Naive thymus-derived CD8-positive, alpha-beta T cell (primary cell): ENCODE measurements at regions of chr16 and their contacts with region 1.

Region 1: DNA sequence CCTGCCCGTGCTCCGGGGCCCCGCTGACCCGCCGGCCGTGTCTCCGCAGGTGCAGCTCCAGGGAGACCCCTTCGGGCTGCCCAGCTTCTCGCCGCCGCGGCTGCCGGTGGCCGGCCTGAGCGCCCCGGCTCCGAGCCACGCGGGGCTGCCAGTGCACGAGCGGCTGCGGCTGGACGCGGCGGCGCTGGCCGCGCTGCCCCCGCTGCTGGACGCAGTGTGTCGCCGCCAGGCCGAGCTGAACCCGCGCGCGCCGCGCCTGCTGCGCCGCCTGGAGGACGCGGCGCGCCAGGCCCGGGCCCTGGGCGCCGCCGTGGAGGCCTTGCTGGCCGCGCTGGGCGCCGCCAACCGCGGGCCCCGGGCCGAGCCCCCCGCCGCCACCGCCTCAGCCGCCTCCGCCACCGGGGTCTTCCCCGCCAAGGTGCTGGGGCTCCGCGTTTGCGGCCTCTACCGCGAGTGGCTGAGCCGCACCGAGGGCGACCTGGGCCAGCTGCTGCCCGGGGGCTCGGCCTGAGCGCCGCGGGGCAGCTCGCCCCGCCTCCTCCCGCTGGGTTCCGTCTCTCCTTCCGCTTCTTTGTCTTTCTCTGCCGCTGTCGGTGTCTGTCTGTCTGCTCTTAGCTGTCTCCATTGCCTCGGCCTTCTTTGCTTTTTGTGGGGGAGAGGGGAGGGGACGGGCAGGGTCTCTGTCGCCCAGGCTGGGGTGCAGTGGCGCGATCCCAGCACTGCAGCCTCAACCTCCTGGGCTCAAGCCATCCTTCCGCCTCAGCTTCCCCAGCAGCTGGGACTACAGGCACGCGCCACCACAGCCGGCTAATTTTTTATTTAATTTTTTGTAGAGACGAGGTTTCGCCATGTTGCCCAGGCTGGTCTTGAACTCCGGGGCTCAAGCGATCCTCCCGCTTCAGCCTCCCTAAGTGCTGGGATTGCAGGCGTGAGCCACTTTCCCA is 5.9 kb downstream of the CTF1 start:
- DNase-seq: peak; percentile 31 to 71 (median 56)
- ATAC-seq: peak; percentile 85 to 87
- H3K4me3 Mint-ChIP-seq: peak overlapping the region; percentile 86 to 99 (median 96)
- H3K27ac Mint-ChIP-seq: peak overlapping the region; percentile 95 to 100 (median 98)
- H3K4me1 Mint-ChIP-seq: peaks cover 15 to 39% (median 31%) of the 10 kb centered on the region in 4 donors
- H3K27me3 Mint-ChIP-seq: no peaks in the 10 kb centered on the region

Region 2: DNA sequence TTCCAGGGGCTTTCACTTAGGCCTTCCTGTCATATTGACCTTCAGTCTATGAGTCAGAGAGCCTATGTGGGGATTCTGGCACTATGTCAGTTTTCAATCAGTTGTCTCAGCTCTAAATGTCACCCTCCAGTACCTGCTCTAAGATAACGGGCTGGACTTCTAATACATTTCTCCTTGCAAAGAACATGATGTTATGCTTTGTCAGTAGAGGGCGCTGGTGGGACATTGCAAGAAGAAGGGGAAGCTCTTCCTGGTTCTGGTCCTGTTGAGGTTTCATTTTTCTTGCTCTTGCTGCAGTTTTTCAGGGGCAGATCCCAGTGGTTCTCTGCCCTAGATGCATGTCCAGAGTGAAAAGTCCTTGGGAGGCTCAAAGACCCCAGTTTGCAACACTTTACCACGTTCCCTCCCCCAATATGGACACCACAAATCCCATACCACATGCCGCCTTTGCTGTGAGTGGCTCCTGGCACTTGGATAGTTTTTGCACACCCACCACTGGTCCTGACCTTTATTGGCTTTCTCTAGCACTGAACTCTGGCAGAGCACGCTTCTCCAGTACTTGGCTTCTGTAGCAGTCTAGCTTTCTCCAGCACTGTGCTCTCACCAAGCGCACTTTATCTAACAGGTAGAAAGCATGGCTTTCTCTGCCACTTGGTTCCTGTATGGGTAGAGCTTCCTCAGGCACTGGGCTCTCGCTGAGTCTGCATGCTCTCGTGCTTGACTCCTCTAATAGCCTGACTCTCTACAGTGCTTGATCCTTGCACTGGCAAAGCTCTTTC is 57.4 kb before region 1 on chr16:
- POLR2A ChIA-PET with region 1: interaction called, 43 read pairs
- DNase-seq: peak; percentile 60 to 93 (median 82)
- ATAC-seq: peak; percentile 91 to 98
- H3K4me3 Mint-ChIP-seq: peak overlapping the region; percentile 8 to 69 (median 40)
- H3K27ac Mint-ChIP-seq: peak overlapping the region; percentile 19 to 91 (median 83)
- H3K4me1 Mint-ChIP-seq: peaks cover 8 to 11% (median 9%) of the 10 kb centered on the region in 4 donors
- H3K27me3 Mint-ChIP-seq: no peaks in the 10 kb centered on the region

Region 3: GRCh38 chr16:30884760-30885159 is 17.5 kb before region 1 on chr16:
- POLR2A ChIA-PET with region 1: interaction called, 11 read pairs
- DNase-seq: no peak
- ATAC-seq: no peak
- H3K4me3 Mint-ChIP-seq: no peak overlapping the region
- H3K27ac Mint-ChIP-seq: peak overlapping the region in 4 of 10 donors; percentile 5 to 87 (median 40)
- H3K4me1 Mint-ChIP-seq: peaks cover 19 to 36% (median 28%) of the 10 kb centered on the region in 4 donors
- H3K27me3 Mint-ChIP-seq: no peaks in the 10 kb centered on the region